ENCODE measurements at regions of chr6 and their contacts with region 1.

Region 1: GRCh38 chr6:108782179-108783041 is 65.8 kb upstream of the ARMC2 start:
- DNase-seq: peak; percentile 92
- ATAC-seq: peak; percentile 89
- H3K4me3 ChIP-seq: peak overlapping the region; percentile 72
- H3K27ac ChIP-seq: peak overlapping the region; percentile 90
- H3K4me1 ChIP-seq: peaks cover 20% of the 10 kb centered on the region
- H3K27me3 ChIP-seq: no peaks in the 10 kb centered on the region
- CTCF ChIP-seq: peak; percentile 78

Region 2: GRCh38 chr6:108432792-108433191 is 349.6 kb before region 1 on chr6:
- CTCF ChIA-PET with region 1: no interaction called
- POLR2A ChIA-PET with region 1: no interaction called
- intact Hi-C with region 1: no loop called
- DNase-seq: no peak
- ATAC-seq: no peak
- H3K4me3 ChIP-seq: no peak overlapping the region
- H3K27ac ChIP-seq: no peak overlapping the region
- H3K4me1 ChIP-seq: no peaks in the 10 kb centered on the region
- H3K27me3 ChIP-seq: no peaks in the 10 kb centered on the region
- CTCF ChIP-seq: no peak

Region 3: GRCh38 chr6:108541838-108542759 is 240.3 kb before region 1 on chr6:
- CTCF ChIA-PET with region 1: no interaction called
- POLR2A ChIA-PET with region 1: no interaction called
- intact Hi-C with region 1: loop called (anchors 1 kb)
- DNase-seq: peak; percentile 76
- ATAC-seq: peak; percentile 71
- H3K4me3 ChIP-seq: peak overlapping the region; percentile 40; the same call in 1 of the 2 replicates
- H3K27ac ChIP-seq: no peak overlapping the region
- H3K4me1 ChIP-seq: 0 out of 2 replicates have a peak, but pooled peaks cover 4% of the 10 kb centered on the region
- H3K27me3 ChIP-seq: no peaks in the 10 kb centered on the region
- CTCF ChIP-seq: peak; percentile 85

Region 4: GRCh38 chr6:108673602-108674001 is 108.8 kb before region 1 on chr6:
- CTCF ChIA-PET with region 1: interaction called, 3 read pairs
- POLR2A ChIA-PET with region 1: no interaction called
- intact Hi-C with region 1: loop called (anchors 2 kb)
- DNase-seq: peak; percentile 78
- ATAC-seq: peak; percentile 94
- H3K4me3 ChIP-seq: no peak overlapping the region
- H3K27ac ChIP-seq: peak overlapping the region; percentile 87
- H3K4me1 ChIP-seq: peaks cover 41% of the 10 kb centered on the region
- H3K27me3 ChIP-seq: no peaks in the 10 kb centered on the region
- CTCF ChIP-seq: no peak

Region 5: DNA sequence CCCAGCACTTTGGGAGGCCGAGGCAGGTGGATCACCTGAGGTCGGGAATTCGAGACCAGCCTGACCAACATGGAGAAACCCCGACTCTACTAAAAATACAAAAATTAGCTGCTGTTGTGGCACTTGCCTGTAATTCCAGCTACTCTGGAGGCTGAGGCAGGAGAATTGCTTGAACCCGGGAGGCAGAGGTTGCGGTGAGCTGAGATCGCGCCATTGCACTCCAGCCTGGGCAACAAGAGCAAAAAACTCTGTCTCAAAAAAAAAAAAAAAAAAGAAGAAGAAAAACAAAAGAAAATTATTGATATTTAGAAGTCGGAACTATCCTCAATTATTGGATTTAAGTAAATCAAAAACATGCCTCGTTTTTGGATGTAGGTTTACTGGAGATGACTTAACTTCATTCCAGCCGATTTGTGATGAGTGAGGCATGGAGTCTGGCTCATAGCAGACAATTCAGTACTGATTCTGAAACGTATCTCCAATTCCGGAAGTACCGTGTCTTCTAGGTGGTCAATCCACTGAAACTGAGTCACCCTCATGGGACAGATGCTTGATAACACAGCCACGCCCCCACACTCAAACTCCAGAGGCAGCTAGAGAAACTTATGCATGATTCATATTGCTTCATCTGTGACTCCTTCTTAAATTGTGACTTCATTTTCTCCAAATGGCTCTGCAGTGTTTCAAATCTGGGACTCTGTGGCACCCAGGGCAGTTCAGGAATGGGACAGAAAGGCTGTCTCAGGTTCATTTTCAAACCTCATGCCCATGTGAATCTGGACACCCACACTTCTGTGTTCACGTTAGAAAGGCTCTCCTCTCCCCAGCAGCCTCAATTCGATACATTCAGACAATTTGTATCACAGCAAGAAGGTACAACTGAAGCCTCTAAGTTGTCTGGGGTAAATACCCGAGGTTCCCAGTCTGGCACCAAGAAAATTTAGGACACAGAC is 44.5 kb before region 1 on chr6:
- CTCF ChIA-PET with region 1: no interaction called
- POLR2A ChIA-PET with region 1: no interaction called
- intact Hi-C with region 1: loop called (anchors 2 kb)
- DNase-seq: peak; percentile 90
- ATAC-seq: peak; percentile 31
- H3K4me3 ChIP-seq: no peak overlapping the region; the same call in 1 of the 2 replicates
- H3K27ac ChIP-seq: peak overlapping the region; percentile 86
- H3K4me1 ChIP-seq: peaks cover 79% of the 10 kb centered on the region
- H3K27me3 ChIP-seq: no peaks in the 10 kb centered on the region
- CTCF ChIP-seq: no peak

Region 6: GRCh38 chr6:108896111-108896661 is 113.8 kb after region 1 on chr6:
- CTCF ChIA-PET with region 1: no interaction called
- POLR2A ChIA-PET with region 1: no interaction called
- intact Hi-C with region 1: loop called (anchors 2 kb)
- DNase-seq: peak; percentile 38
- ATAC-seq: peak; percentile 31; the same call in 1 of the 2 replicates
- H3K4me3 ChIP-seq: no peak overlapping the region
- H3K27ac ChIP-seq: no peak overlapping the region
- H3K4me1 ChIP-seq: peaks cover 12% of the 10 kb centered on the region
- H3K27me3 ChIP-seq: no peaks in the 10 kb centered on the region
- CTCF ChIP-seq: no peak